Activated CD8-positive, alpha-beta T cell treated with anti-CD3 and anti-CD28 coated beads for 36 hours (primary cell): ENCODE measurements at regions of chr1 and their contacts with region 1.

Region 1: GRCh38 chr1:31065310-31066217 is at the start of gene PUM1:
- DNase-seq: peak; percentile 99
- ATAC-seq: peak; percentile 97
- H3K4me3 Mint-ChIP-seq: peak within 1 kb of the TSS; percentile 92
- H3K27ac Mint-ChIP-seq: peak within 1 kb of the TSS; percentile 99
- H3K4me1 Mint-ChIP-seq: peaks cover 22% of the 10 kb centered on the region
- H3K27me3 Mint-ChIP-seq: no peaks in the 10 kb centered on the region
- CTCF ChIP-seq: no peak
- total RNA-seq, gene PUM1: 98.0 to 99.0 TPM

Region 2: GRCh38 chr1:31010086-31010989 is 55.2 kb before region 1 on chr1:
- CTCF ChIA-PET with region 1: no interaction called
- POLR2A ChIA-PET with region 1: interaction called, 16 read pairs
- intact Hi-C with region 1: loop called (anchors 10 kb)
- DNase-seq: peak; percentile 64
- ATAC-seq: peak; percentile 97
- H3K4me3 Mint-ChIP-seq: no peak overlapping the region
- H3K27ac Mint-ChIP-seq: peak overlapping the region; percentile 89
- H3K4me1 Mint-ChIP-seq: peaks cover 75% of the 10 kb centered on the region
- H3K27me3 Mint-ChIP-seq: no peaks in the 10 kb centered on the region
- CTCF ChIP-seq: no peak

Region 3: DNA sequence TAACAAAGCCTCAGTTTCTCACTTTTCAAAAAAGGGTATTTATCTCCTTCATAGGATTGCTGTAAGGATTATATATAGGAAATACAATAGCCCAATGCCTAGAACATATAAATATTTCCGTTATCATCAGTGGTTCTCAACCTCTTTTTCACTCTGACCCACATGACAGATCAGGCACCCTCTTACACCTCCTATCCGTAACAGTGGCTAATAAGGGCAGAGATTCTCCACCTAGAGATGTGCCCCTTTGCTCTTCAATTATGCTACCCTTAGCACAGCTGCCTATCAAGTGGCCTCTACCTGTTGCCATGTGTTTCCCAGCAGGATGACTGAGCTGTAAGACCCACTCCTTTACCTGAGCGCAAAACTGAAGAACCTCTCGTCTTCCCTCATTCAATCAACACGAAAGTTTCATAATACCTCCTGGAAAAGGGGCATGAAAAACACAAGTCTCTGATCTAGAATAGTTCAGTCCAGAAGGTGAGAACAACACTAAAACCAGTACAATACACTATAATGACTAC is 10.5 kb before region 1 on chr1:
- CTCF ChIA-PET with region 1: interaction called, 3 read pairs
- POLR2A ChIA-PET with region 1: interaction called, 17 read pairs
- intact Hi-C with region 1: no loop called
- DNase-seq: no peak
- ATAC-seq: peak; percentile 35
- H3K4me3 Mint-ChIP-seq: no peak overlapping the region
- H3K27ac Mint-ChIP-seq: peak overlapping the region; percentile 72
- H3K4me1 Mint-ChIP-seq: peaks cover 56% of the 10 kb centered on the region
- H3K27me3 Mint-ChIP-seq: no peaks in the 10 kb centered on the region
- CTCF ChIP-seq: no peak

Region 4: DNA sequence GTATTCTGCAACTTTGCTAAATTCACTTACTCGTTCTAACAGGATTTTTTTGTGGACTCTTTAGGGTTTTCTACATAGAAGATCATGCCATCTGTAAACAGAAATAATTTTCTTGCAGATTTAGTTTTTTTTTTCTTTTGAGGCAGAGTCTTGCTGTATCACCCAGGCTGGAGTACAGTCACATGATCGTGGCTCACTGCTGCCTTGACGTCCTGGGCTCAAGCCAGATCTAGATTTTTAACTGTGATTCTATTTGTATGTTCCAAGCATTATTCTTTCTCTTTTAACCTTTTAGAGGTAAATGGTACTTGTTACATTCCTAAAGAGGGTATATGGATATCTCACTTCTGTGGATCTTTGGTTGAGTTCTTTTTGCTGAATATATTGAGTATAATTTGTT is 288.7 kb after region 1 on chr1:
- CTCF ChIA-PET with region 1: no interaction called
- POLR2A ChIA-PET with region 1: no interaction called
- intact Hi-C with region 1: no loop called
- DNase-seq: no peak
- ATAC-seq: no peak
- H3K4me3 Mint-ChIP-seq: no peak overlapping the region
- H3K27ac Mint-ChIP-seq: no peak overlapping the region
- H3K4me1 Mint-ChIP-seq: no peaks in the 10 kb centered on the region
- H3K27me3 Mint-ChIP-seq: no peaks in the 10 kb centered on the region
- CTCF ChIP-seq: no peak